Testis (tissue), 5 donors: ENCODE measurements at regions of chr3 and their contacts with region 1.

Region 1: GRCh38 chr3:10344147-10344943 is 23.4 kb upstream of the SEC13 start:
- DNase-seq: peak; percentile 74
- H3K4me3 ChIP-seq: no peak overlapping the region
- H3K27ac ChIP-seq: no peak overlapping the region
- H3K4me1 ChIP-seq: no peaks in the 10 kb centered on the region
- H3K27me3 ChIP-seq: no peaks in the 10 kb centered on the region
- CTCF ChIP-seq: peak; percentile 51 to 91 (median 70)
- POLR2A ChIP-seq: no peak

Region 2: DNA sequence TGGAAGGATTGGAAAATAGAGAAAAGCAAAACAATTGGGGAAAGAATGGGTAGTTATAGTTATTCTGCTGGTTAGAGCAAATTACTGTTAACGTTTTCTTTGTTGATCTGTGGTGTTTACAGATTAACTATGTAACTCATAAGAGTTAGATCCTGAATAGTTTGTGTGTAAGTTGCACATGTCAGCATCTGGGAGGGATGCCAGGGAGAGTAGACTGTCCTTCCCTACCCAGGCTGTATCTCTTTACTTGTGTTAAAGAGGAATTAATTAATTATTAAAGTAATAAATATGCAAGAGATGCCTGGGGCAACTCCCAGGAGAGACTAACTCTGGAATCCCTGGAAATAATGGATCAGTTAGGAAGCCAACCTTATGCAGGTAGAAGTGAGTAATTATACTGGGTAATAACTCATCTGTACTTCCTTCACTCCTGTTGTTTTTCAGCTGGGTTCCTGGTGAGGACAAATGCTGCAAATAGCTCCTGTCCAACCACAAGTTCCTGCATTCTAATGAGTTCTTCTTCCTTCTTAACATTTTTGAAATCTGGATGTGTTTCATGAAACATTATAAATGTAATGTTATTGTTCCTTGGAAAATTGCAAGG is 70.5 kb before region 1 on chr3:
- intact Hi-C with region 1: no loop called
- DNase-seq: peak; percentile 32
- H3K4me3 ChIP-seq: no peak overlapping the region
- H3K27ac ChIP-seq: no peak overlapping the region
- H3K4me1 ChIP-seq: peaks cover 6% of the 10 kb centered on the region
- H3K27me3 ChIP-seq: no peaks in the 10 kb centered on the region
- CTCF ChIP-seq: no peak
- POLR2A ChIP-seq: no peak

Region 3: DNA sequence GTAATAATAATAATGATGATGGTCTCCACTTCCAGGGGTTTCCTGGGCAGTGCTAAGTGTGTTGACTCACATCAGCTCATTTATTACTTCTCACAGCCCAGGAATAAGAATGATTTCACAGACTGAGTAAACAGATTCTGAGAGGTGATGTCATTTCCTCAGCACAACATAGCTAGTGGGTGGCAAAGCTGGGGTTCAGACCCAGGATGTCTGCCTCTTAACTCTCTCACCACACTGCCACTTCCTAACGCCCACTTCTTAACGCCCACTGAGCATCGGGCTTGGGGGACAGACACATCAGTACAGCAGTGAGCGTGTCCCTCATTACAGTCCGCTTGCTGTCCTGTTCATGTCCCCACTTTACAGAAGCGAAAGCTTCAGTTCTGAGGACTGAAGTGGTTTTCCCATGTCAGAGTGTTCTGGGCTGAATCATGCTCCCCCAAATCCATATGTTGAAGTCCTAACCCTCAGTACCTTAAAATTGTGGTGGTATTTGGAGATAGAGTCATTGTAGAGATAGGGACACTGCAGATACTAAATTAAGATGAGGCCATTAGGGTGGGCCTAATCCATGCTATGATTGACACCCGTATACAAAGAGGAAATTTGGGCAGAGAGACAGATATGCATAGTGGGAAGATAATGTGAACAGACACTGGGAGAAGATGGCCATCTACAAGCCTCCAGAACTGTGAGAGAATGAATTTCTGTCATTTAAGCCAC is 93.1 kb after region 1 on chr3:
- intact Hi-C with region 1: no loop called
- DNase-seq: no peak
- H3K4me3 ChIP-seq: no peak overlapping the region
- H3K27ac ChIP-seq: no peak overlapping the region
- H3K4me1 ChIP-seq: no peaks in the 10 kb centered on the region
- H3K27me3 ChIP-seq: no peaks in the 10 kb centered on the region
- CTCF ChIP-seq: no peak
- POLR2A ChIP-seq: no peak

Region 4: DNA sequence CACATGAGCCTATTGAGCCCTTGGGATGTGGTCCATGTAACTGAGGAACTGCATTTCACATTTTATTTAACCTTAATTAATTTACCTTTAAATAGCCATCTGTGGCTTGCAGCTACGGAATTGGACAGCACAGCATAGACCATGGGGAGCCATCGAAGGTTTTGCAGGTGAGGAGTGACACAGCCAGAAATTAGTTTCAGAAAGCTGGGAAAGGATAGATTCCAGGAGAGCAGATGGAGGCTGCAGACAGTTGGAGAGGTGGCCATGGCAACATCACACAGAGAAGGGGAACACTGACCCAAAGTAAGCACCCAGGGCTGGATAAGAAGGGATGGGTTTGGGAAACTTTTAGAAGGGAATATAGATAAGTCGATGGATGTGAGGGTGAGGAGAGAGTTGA is 371.5 kb after region 1 on chr3:
- intact Hi-C with region 1: loop called (anchors 10 kb)
- DNase-seq: no peak
- H3K4me3 ChIP-seq: no peak overlapping the region
- H3K27ac ChIP-seq: no peak overlapping the region
- H3K4me1 ChIP-seq: no peaks in the 10 kb centered on the region
- H3K27me3 ChIP-seq: no peaks in the 10 kb centered on the region
- CTCF ChIP-seq: no peak
- POLR2A ChIP-seq: no peak

Region 5: DNA sequence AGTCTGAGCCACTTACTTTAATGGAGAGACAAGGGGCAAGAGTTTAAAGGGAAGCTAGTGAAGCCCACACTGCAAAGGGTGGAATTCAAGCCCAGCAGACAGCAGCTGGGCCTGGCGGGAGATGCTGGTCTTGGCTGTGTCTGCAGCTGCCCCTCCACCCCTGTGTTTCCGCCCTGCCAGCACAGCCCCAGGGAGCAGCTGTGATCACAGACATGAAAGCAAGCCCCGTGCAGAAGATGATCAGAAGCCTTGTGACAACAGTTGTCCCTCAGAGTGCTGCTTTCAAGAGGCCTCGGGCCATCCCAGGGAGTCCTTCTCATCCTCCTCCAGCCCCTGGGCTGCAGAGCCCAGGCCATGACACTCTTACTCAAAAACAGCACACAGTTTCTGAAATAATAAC is 624.1 kb after region 1 on chr3:
- intact Hi-C with region 1: no loop called
- DNase-seq: no peak
- H3K4me3 ChIP-seq: no peak overlapping the region
- H3K27ac ChIP-seq: no peak overlapping the region
- H3K4me1 ChIP-seq: peaks cover 4% of the 10 kb centered on the region
- H3K27me3 ChIP-seq: no peaks in the 10 kb centered on the region
- CTCF ChIP-seq: no peak
- POLR2A ChIP-seq: no peak